CD8-positive, alpha-beta memory T cell (primary cell): ENCODE measurements at regions of chr3 and their contacts with region 1.

Region 1: GRCh38 chr3:50192689-50193141 is 1.3 kb downstream of the GNAT1 start:
- DNase-seq: peak; percentile 70 to 86 (median 77)
- H3K4me3 ChIP-seq: no peak overlapping the region
- H3K4me3 Mint-ChIP-seq: peak overlapping the region in 4 of 7 donors; percentile 38 to 78 (median 46)
- H3K27ac ChIP-seq: no peak overlapping the region
- H3K27ac Mint-ChIP-seq: peak overlapping the region in 3 of 8 donors; percentile 17 to 83 (median 29)
- H3K4me1 ChIP-seq: peaks cover 21% of the 10 kb centered on the region
- H3K4me1 Mint-ChIP-seq: peaks cover 4 to 22% (median 7%) of the 10 kb centered on the region in 3 donors
- H3K27me3 ChIP-seq: peaks cover 23% of the 10 kb centered on the region
- H3K27me3 Mint-ChIP-seq: peaks cover 7 to 13% of the 10 kb centered on the region in 2 donors

Region 2: GRCh38 chr3:50132421-50133282 is 60.1 kb before region 1 on chr3:
- CTCF ChIA-PET with region 1: no interaction called
- POLR2A ChIA-PET with region 1: no interaction called
- DNase-seq: no peak
- H3K4me3 ChIP-seq: no peak overlapping the region
- H3K4me3 Mint-ChIP-seq: no peak overlapping the region
- H3K27ac ChIP-seq: no peak overlapping the region
- H3K27ac Mint-ChIP-seq: no peak overlapping the region
- H3K4me1 ChIP-seq: no peaks in the 10 kb centered on the region
- H3K4me1 Mint-ChIP-seq: no peaks in the 10 kb centered on the region
- H3K27me3 ChIP-seq: no peaks in the 10 kb centered on the region
- H3K27me3 Mint-ChIP-seq: peaks cover 0 to 2% of the 10 kb centered on the region in 2 donors

Region 3: DNA sequence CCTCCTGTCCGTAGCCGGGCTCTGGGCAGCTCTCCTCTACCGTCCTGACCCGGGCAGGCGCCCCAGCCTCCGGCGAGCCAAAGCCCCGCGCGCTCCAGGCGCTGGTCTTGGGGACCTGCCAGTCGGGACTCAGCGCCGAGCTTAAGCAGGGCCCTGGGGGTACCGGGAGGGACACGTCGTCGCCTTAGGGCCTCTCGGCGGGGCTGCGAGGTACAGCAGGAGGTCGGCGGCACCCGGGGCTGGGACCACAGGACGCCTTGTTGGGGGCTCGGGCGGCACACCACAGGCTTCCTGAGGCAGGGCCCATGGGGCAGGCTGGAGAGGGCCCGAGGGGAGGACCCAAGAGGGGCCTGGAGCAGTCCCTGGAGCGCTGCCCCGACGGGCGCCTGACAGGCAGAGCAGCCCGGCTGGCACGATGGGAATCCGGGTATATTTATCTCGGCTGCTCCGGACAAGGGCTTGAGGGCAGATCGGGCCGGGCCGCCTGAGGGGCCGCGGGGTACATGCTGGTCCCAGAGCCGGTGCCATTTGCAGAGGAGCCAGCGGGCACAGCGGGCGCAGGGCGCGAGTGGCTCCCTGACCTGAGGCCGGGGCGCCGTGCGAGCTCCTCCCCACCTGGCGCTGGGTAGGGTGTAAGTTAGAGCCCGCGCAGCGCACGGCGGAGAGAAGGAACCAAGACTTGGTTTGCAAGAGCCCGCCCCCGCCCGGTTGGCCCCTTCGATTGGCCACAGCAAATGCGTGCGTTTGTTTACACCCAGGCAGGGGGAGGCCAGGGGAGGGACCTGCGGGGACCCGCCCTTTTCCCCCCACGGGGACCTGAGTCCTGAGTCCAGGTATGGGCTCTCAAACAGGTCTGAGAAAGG is 12.9 kb after region 1 on chr3:
- CTCF ChIA-PET with region 1: interaction called, 47 read pairs
- POLR2A ChIA-PET with region 1: no interaction called
- DNase-seq: peak in 2 of 5 donors; percentile 10 to 28
- H3K4me3 ChIP-seq: no peak overlapping the region
- H3K4me3 Mint-ChIP-seq: peak overlapping the region in 2 of 7 donors; percentile 36 to 53
- H3K27ac ChIP-seq: no peak overlapping the region
- H3K27ac Mint-ChIP-seq: no peak overlapping the region
- H3K4me1 ChIP-seq: no peaks in the 10 kb centered on the region
- H3K4me1 Mint-ChIP-seq: peaks cover 0 to 3% (median 2%) of the 10 kb centered on the region in 3 donors
- H3K27me3 ChIP-seq: peaks cover 27% of the 10 kb centered on the region
- H3K27me3 Mint-ChIP-seq: peaks cover 34 to 39% of the 10 kb centered on the region in 2 donors

Region 4: DNA sequence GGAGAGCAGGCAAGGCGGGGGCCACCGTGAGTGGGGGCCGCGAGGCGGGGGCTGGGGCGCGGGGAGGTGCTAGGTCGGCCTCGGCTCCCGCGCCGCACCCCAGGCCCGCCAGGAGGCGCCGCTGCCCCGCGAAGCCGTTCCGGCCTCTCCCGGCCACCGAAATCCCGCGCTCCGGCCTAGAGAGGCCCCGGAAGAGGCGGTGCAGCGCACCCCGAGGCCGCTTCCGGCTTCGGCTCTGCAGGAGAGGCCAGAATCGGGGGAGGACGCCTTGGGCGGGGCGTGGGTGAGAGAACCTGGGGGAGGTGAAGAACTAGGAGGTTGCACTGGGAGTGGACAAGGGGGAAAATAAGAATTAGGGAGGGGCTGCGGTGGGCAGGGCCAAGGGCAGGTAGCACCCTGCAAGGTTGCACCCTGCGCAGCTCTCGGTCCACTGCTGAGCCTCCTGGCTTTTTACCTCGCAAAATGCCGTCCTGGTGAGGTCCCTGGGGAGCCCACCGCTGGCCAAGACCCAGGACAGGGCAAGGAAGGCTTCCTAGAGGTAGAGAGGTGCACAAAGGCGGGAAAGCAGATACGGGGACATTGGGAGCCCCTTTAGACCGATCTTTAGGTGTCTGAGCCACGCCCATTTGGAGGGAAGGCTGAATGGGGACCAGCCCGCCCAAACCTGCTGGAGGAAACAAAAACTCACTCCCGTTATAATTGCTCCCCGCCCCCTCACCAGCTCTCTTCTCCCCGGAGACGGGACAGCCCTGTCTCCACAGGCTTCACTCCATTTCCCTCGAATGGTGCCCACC is 34.9 kb after region 1 on chr3:
- CTCF ChIA-PET with region 1: interaction called, 266 read pairs
- POLR2A ChIA-PET with region 1: interaction called, 7 read pairs
- DNase-seq: peak; percentile 88 to 93 (median 89)
- H3K4me3 ChIP-seq: peak overlapping the region; percentile 86
- H3K4me3 Mint-ChIP-seq: peak overlapping the region; percentile 89 to 99 (median 94)
- H3K27ac ChIP-seq: peak overlapping the region; percentile 63
- H3K27ac Mint-ChIP-seq: peak overlapping the region; percentile 79 to 96 (median 92)
- H3K4me1 ChIP-seq: peaks cover 20% of the 10 kb centered on the region
- H3K4me1 Mint-ChIP-seq: peaks cover 15 to 33% (median 24%) of the 10 kb centered on the region in 3 donors
- H3K27me3 ChIP-seq: no peaks in the 10 kb centered on the region
- H3K27me3 Mint-ChIP-seq: peaks cover 0 to 3% of the 10 kb centered on the region in 2 donors

Region 5: DNA sequence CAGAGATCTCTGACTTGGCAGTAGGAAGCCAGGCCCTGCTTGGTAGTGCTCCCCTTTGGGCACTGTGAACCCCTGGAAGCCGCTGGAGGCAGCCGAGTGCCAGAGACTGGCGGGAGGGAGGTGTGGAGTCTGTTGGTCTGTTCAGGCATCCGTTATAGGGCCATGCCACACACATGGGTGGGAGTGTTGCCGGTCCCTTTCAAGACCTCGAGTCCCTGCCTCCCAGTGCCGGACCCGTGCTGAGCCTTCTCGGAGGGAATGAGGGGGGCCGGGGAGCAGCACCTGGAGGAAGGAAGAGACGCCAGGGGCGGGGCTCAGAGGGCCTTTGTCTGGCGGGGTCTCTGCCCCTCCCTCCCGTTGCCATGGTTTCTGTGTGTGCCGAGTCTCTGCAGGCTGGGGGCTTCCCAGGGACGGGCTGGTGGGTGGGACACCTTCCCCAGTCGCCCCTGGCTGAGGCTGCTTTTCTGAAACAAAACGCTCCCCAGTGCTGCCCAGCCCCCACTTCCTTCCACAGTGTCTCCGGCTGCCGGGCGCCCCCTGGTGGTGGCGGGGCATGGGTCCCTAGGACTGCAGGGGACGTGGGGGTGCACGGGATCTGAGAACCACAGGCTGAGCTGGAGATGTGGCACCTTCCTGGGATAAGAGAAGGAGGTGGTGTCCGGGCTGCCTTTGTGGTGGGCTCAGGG is 53.3 kb after region 1 on chr3:
- CTCF ChIA-PET with region 1: interaction called, 116 read pairs
- POLR2A ChIA-PET with region 1: interaction called, 6 read pairs
- DNase-seq: peak; percentile 88 to 97 (median 94)
- H3K4me3 ChIP-seq: peak overlapping the region; percentile 59
- H3K4me3 Mint-ChIP-seq: peak overlapping the region; percentile 70 to 79 (median 76)
- H3K27ac ChIP-seq: peak overlapping the region; percentile 75
- H3K27ac Mint-ChIP-seq: peak overlapping the region; percentile 81 to 99 (median 96)
- H3K4me1 ChIP-seq: peaks cover 92% of the 10 kb centered on the region
- H3K4me1 Mint-ChIP-seq: peaks cover 65 to 91% (median 75%) of the 10 kb centered on the region in 3 donors
- H3K27me3 ChIP-seq: no peaks in the 10 kb centered on the region
- H3K27me3 Mint-ChIP-seq: no peaks in the 10 kb centered on the region

Region 6: DNA sequence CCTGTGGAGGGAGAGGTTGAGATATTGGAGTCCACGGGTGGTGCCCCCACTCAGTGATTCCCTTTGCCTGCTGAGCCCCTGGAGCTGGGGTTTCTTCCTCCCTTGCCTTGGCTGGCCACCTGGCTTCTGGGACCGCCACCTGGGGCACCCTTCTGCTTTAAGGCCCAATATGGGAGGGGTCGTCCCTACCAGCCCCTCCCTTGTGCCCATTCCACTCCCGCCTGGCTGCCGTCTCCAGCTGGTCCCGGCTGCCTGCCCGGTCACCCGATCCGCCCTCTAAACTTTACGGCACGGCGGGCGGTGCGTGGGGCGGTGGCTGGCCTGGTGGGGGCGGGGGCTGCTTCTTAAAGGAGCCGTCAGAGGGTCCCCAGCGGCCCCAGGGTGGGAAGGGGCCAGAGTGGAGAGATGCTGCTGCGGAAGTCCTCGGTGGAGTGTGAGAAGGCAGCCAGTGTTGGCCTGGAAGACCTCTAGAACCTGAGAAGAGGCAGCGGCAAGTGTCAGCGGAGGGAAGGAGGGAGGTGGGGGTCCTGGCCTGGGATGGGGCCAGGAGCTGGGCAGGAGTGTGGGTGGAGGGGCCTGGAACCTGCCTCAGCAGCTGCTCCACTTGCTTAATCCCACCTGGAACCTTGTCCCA is 74.7 kb after region 1 on chr3:
- CTCF ChIA-PET with region 1: interaction called, 86 read pairs
- POLR2A ChIA-PET with region 1: no interaction called
- DNase-seq: no peak
- H3K4me3 ChIP-seq: no peak overlapping the region
- H3K4me3 Mint-ChIP-seq: no peak overlapping the region
- H3K27ac ChIP-seq: no peak overlapping the region
- H3K27ac Mint-ChIP-seq: no peak overlapping the region
- H3K4me1 ChIP-seq: no peaks in the 10 kb centered on the region
- H3K4me1 Mint-ChIP-seq: peaks cover 0 to 3% (median 0%) of the 10 kb centered on the region in 3 donors
- H3K27me3 ChIP-seq: no peaks in the 10 kb centered on the region
- H3K27me3 Mint-ChIP-seq: peaks cover 0 to 7% of the 10 kb centered on the region in 2 donors

Region 7: GRCh38 chr3:50278868-50279224 is 86.1 kb after region 1 on chr3 and contains the start of gene LSMEM2:
- CTCF ChIA-PET with region 1: interaction called, 86 read pairs
- POLR2A ChIA-PET with region 1: no interaction called
- DNase-seq: no peak
- H3K4me3 ChIP-seq: no peak within 1 kb of the TSS
- H3K4me3 Mint-ChIP-seq: no peak within 1 kb of the TSS
- H3K27ac ChIP-seq: no peak within 1 kb of the TSS
- H3K27ac Mint-ChIP-seq: peak within 1 kb of the TSS in 1 of 8 donors; percentile 61
- H3K4me1 ChIP-seq: peaks cover 21% of the 10 kb centered on the region
- H3K4me1 Mint-ChIP-seq: peaks cover 15 to 23% (median 19%) of the 10 kb centered on the region in 3 donors
- H3K27me3 ChIP-seq: peaks cover 19% of the 10 kb centered on the region
- H3K27me3 Mint-ChIP-seq: peaks cover 24 to 28% of the 10 kb centered on the region in 2 donors
- total RNA-seq, gene LSMEM2: not detected